PC-9 (cell line): ENCODE measurements at regions of chr6 and their contacts with region 1.

Region 1: GRCh38 chr6:42383421-42384205 is 68.1 kb downstream of the TRERF1 start:
- DNase-seq: no peak
- H3K4me3 ChIP-seq: no peak overlapping the region
- H3K27ac ChIP-seq: no peak overlapping the region
- H3K4me1 ChIP-seq: no peaks in the 10 kb centered on the region
- H3K27me3 ChIP-seq: no peaks in the 10 kb centered on the region
- CTCF ChIP-seq: no peak

Region 2: DNA sequence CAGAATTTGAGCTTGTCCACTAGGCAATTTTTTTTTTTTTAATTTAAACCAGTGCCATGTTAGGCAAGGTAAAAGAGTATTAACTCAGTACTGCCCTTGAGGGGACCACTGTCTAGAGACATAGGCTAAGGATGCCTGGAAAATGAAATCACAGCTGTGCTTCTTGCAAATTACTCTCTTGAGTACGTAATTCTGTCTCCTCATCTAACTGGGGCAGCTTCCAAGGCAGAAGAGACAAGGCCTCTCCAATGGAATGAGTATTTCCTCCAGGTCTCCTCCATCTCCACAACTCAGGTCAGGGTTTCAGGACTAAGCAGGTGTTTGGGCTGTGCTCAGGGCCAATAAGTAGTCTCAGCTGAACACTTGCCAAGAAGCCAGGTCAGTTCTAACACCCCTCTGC is 132.1 kb before region 1 on chr6:
- CTCF ChIA-PET with region 1: no interaction called
- POLR2A ChIA-PET with region 1: interaction called, 11 read pairs
- intact Hi-C with region 1: no loop called
- DNase-seq: no peak
- H3K4me3 ChIP-seq: no peak overlapping the region
- H3K27ac ChIP-seq: no peak overlapping the region
- H3K4me1 ChIP-seq: peaks cover 15% of the 10 kb centered on the region
- H3K27me3 ChIP-seq: no peaks in the 10 kb centered on the region
- CTCF ChIP-seq: no peak